Caki2 (cell line): ENCODE measurements at regions of chr7 and their contacts with region 1.

Region 1: GRCh38 chr7:16982640-16983350 is 101.0 kb upstream of the AGR3 start:
- DNase-seq: peak; percentile 67

Region 2: DNA sequence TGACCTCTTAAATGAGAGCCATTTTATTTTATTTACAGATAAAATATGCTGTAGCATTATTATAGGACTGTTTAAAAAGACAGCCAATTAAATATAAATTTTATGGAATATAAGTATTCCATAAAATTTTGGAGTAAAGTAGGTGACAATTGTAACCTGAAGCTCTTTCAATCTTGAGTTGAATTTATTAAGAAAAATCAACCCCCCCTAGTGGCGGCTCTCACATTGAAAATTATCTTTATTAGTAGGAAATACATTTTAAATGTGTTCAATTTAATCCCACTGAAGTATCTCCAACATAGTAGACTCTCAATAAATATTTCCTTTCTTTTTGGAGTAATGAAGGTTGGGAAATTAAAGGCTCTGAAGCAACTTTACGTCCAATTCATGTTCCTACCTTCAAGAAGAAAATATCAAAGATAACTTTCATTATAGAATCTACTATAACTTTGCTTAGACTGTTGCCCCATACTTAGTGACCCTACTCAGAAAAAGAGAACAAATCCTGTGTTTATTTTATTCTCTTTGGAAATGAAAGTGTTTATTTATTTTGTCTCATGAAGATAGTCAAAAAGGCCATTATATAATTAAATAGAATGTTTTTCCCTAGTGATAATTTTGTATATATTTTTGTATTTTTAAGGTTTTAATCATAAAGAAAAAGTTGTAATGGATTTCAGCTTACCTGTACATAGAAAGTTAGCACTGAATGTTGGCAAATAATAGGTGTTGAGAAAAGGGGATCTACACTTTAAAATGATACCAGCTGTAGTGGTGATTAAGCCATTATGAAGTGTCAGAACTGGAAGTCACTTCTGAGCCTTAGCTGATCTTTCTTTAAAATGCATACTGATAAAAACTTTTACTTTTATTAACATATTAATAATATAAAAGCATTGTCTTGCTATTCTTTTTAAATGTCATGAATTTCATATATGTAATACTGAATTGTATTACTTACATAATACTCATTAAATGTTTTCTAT is 319.0 kb after region 1 on chr7:
- in situ Hi-C with region 1: loop called (anchors 10 kb)
- DNase-seq: peak; percentile 47